CD4-positive, alpha-beta memory T cell (primary cell): ENCODE measurements at regions of chr6 and their contacts with region 1.

Region 1: DNA sequence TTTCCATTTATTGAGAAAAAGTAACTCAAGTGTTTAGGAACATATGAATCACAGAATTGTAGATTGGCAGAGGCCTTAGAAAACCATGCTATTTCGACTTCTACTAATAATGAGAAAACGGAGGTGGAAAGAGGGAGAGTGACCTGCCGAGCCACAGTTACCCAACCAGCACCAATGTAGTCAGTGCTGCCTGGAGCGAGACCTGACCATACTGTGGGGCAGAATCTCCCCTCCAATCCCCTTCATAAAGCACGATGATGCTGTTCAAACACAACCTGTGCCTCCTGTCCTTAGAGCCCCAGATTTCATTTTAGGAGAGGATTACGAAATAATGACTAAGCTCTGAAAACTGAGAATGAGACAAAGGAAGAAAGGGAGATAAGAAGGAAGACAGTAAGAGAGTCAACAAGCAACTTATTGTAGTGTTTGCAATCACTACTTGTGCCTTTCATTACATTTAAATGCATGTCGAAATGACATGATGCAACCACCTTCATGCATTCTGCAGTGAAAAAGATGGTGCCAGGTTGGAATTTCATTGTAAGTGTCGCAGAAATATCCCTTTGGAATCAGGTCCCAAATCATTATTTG is 70.6 kb downstream of the ATXN1 start:
- DNase-seq: no peak
- H3K4me3 ChIP-seq: peak overlapping the region in 1 of 2 donors; percentile 3
- H3K4me3 Mint-ChIP-seq: peak overlapping the region; percentile 42 to 77 (median 71)
- H3K27ac ChIP-seq: peak overlapping the region; percentile 41
- H3K27ac Mint-ChIP-seq: peak overlapping the region; percentile 80 to 98 (median 90)
- H3K4me1 ChIP-seq: peaks cover 89% of the 10 kb centered on the region
- H3K4me1 Mint-ChIP-seq: peaks cover 53 to 97% (median 77%) of the 10 kb centered on the region in 4 donors
- H3K27me3 ChIP-seq: no peaks in the 10 kb centered on the region
- H3K27me3 Mint-ChIP-seq: no peaks in the 10 kb centered on the region

Region 2: DNA sequence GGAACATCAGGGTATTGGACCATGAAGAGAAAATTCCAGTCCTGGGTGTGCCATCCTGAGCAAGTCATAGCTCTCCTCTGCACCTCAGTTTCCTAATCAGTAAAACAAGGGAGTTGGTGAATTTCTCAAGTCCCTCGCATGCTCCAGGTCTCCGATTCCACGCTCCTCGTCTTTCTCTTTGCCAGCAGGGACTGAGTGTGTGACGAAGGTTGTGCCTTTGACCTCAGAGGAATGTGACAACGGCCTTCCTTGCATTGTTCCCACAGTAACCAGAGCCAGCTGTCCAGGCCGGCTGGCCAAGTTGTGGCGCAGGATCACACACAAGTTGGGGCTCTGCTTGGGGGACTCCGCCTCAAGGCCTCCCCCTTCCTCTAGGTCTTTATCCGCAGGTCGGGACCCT is 146.7 kb before region 1 on chr6:
- CTCF ChIA-PET with region 1: no interaction called
- POLR2A ChIA-PET with region 1: no interaction called
- intact Hi-C with region 1: no loop called
- DNase-seq: no peak
- H3K4me3 ChIP-seq: no peak overlapping the region
- H3K4me3 Mint-ChIP-seq: no peak overlapping the region
- H3K27ac ChIP-seq: no peak overlapping the region
- H3K27ac Mint-ChIP-seq: no peak overlapping the region
- H3K4me1 ChIP-seq: no peaks in the 10 kb centered on the region
- H3K4me1 Mint-ChIP-seq: peaks cover 4 to 9% (median 5%) of the 10 kb centered on the region in 4 donors
- H3K27me3 ChIP-seq: no peaks in the 10 kb centered on the region
- H3K27me3 Mint-ChIP-seq: no peaks in the 10 kb centered on the region

Region 3: DNA sequence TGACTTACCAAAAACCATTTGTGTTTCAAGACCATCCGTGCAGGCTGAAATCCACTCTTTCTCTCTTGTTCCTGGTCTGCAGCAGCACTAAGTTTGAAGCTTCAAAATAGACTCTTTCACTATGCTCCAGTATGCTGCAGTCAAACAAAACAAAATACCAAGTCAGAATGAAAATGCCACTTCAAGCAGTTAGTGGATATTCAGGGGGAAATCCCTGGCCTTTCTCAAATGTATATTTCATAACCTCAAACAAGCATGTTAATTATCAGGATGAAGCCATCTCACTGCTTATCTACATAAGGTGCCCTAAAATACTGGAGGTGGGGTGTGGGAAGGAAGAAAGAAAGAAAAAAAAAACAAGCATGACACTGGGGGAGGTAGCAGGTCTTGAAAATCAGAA is 32.9 kb before region 1 on chr6:
- CTCF ChIA-PET with region 1: interaction called, 11 read pairs
- POLR2A ChIA-PET with region 1: interaction called, 52 read pairs
- intact Hi-C with region 1: loop called (anchors 5 kb)
- DNase-seq: peak in 3 of 5 donors; percentile 29 to 43 (median 31)
- H3K4me3 ChIP-seq: no peak overlapping the region
- H3K4me3 Mint-ChIP-seq: peak overlapping the region; percentile 55 to 85 (median 68)
- H3K27ac ChIP-seq: peak overlapping the region; percentile 44
- H3K27ac Mint-ChIP-seq: peak overlapping the region; percentile 77 to 95 (median 92)
- H3K4me1 ChIP-seq: peaks cover 75% of the 10 kb centered on the region
- H3K4me1 Mint-ChIP-seq: peaks cover 59 to 78% (median 66%) of the 10 kb centered on the region in 4 donors
- H3K27me3 ChIP-seq: no peaks in the 10 kb centered on the region
- H3K27me3 Mint-ChIP-seq: no peaks in the 10 kb centered on the region

Region 4: DNA sequence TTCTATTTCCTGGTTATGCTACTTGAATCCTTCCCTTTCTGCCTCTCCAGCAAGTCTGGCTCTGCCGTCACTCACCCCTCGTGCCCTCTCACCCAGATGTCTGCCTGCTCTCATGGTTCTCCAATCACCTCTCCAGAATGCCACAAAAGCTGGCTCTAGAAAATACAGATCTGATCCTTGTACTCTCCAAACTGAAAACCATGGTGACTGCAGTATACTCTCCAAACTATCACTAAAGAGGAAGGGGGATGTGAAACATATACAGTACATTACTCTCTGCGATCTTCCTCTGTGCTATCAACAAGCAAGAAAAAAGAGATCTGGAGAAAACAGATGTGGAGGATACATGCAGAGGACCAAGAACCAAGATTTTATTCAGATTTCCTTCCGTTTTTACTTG is 20.5 kb before region 1 on chr6:
- CTCF ChIA-PET with region 1: interaction called, 3 read pairs
- POLR2A ChIA-PET with region 1: interaction called, 65 read pairs
- intact Hi-C with region 1: loop called (anchors 2 kb)
- DNase-seq: no peak
- H3K4me3 ChIP-seq: no peak overlapping the region
- H3K4me3 Mint-ChIP-seq: peak overlapping the region; percentile 21 to 91 (median 76)
- H3K27ac ChIP-seq: peak overlapping the region; percentile 35
- H3K27ac Mint-ChIP-seq: peak overlapping the region; percentile 74 to 96 (median 92)
- H3K4me1 ChIP-seq: peaks cover 61% of the 10 kb centered on the region
- H3K4me1 Mint-ChIP-seq: peaks cover 50 to 69% (median 55%) of the 10 kb centered on the region in 4 donors
- H3K27me3 ChIP-seq: no peaks in the 10 kb centered on the region
- H3K27me3 Mint-ChIP-seq: no peaks in the 10 kb centered on the region

Region 5: DNA sequence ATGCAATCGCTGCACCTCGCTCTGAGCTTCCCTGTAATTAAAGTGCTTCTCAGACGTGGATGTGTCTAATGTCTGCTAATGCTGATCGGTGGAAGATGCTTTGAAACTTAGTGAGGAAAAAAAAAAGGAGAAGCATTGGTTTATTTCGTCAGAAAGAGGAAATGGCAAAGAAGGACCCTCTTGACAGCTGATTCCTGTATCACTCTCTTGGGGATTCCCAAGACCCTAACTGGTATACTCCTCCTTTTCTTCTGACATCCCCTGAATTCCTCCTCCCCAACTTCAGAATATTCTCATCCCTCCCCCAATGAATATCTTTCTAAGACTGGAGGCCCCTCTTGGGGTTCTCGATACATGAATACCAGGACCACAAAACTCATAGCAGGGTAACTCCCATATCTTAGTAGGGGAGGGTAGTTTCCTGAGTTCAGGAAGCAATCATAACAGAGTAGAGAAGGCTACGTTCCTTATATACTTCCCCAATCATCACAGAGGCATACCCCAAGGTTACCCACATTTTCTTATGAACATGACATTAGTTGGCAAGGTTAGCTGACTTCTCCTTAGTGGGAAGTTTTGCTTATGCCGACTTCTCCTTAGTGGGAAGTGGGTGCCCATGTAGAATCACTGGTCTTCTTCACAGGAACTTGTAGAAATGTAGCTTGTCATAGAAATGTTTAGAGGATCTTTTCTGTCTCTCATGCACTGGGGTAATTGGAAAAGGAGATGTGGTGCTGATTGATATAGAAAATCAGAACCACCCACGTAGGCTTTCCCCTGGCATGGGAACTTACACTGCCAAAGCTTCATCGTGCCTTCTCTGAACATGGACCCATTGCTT is 134.4 kb after region 1 on chr6:
- CTCF ChIA-PET with region 1: no interaction called
- POLR2A ChIA-PET with region 1: no interaction called
- intact Hi-C with region 1: no loop called
- DNase-seq: no peak
- H3K4me3 ChIP-seq: no peak overlapping the region
- H3K4me3 Mint-ChIP-seq: no peak overlapping the region
- H3K27ac ChIP-seq: no peak overlapping the region
- H3K27ac Mint-ChIP-seq: no peak overlapping the region
- H3K4me1 ChIP-seq: no peaks in the 10 kb centered on the region
- H3K4me1 Mint-ChIP-seq: peaks cover 5 to 10% (median 6%) of the 10 kb centered on the region in 4 donors
- H3K27me3 ChIP-seq: no peaks in the 10 kb centered on the region
- H3K27me3 Mint-ChIP-seq: peaks cover 8 to 9% of the 10 kb centered on the region in 2 donors

Region 6: GRCh38 chr6:16849280-16849987 is 158.7 kb after region 1 on chr6:
- CTCF ChIA-PET with region 1: no interaction called
- POLR2A ChIA-PET with region 1: no interaction called
- intact Hi-C with region 1: no loop called
- DNase-seq: peak in 2 of 5 donors; percentile 22 to 30
- H3K4me3 ChIP-seq: no peak overlapping the region
- H3K4me3 Mint-ChIP-seq: peak overlapping the region in 1 of 8 donors; percentile 3
- H3K27ac ChIP-seq: no peak overlapping the region
- H3K27ac Mint-ChIP-seq: no peak overlapping the region
- H3K4me1 ChIP-seq: peaks cover 15% of the 10 kb centered on the region
- H3K4me1 Mint-ChIP-seq: peaks cover 9 to 15% (median 11%) of the 10 kb centered on the region in 4 donors
- H3K27me3 ChIP-seq: no peaks in the 10 kb centered on the region
- H3K27me3 Mint-ChIP-seq: peaks cover 2 to 8% of the 10 kb centered on the region in 2 donors